ENCODE measurements at regions of chr4 and their contacts with region 1.

Region 1: DNA sequence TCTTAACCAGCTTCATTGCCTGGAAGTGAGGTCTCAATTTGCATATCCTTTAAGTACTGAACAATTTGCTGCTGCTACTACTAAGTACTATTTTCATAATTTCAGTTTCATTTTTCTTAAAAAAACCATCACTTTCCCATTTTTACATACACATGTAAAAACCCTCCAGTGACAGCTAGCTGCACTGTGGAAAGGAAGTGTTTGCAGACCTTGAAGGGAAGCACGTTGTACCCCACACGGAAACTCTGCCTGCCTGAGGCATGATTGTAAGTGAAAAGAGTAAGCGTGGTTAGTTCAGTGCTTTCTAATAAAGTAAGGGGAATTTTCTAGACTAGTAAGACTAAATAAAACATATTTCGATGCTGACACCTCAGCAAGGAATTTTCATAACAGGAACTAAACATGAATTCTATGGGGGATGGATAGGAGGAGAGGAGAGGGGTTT is 103.6 kb downstream of the RAPGEF2 start:
- DNase-seq: no peak
- ATAC-seq: no peak

Region 2: DNA sequence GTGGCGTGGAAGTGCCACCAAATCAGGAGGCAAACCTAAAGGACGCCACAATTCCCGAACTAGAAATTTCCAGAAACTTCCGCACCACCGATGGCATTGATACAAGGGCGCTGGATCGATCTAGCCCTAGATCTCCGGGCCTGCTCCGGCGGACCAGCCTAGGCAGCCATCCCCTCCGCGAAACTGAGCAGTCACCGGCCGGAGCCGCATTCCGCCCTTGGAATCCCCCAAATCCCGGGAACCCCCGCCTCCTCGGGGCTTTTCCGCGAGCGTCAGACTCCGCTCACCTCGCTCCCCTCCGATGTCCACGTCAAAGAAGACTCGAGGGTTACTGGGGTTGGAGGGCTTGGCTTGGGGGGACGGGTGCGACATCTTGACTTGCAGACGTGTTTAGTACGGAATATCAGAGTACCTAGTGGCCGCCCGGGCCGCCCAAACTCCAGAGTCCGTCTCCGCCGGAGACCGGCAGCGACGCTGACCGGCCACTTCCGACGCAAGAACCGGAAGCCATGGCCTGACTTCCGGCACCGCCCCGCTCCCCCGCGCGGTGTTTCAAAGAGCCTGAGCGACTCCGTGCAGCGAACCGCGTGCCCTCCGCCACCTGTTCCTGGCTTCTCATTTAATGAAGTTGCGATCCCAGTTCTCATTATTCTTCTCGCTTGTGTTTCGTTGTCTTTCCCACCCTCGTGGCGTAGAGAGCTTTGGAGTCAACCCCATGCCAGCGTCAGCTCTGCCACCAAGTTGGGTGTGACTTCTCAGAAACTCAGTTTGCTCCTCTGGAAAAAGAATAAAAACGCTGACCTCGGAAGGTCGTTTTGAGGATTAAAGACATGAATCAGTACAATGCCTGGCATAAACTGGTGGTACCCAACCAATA is 483.3 kb before region 1 on chr4 and contains the start of gene PPID:
- intact Hi-C with region 1: loop called in 1 of 2 experiments (anchors 10 kb)
- DNase-seq: peak; percentile 89
- ATAC-seq: peak; percentile 97 to 99
- total RNA-seq, gene PPID: 22.6 to 30.7 TPM

Region 3: GRCh38 chr4:158768555-158769174 is 437.8 kb before region 1 on chr4 and contains the start of gene FNIP2:
- intact Hi-C with region 1: no loop called
- DNase-seq: peak; percentile 89
- ATAC-seq: peak; percentile 95 to 97
- total RNA-seq, gene FNIP2: 40.6 to 55.3 TPM

Region 4: GRCh38 chr4:158856852-158857251 is 349.6 kb before region 1 on chr4:
- intact Hi-C with region 1: loop called in 1 of 2 experiments (anchors 10 kb)
- DNase-seq: no peak
- ATAC-seq: peak; percentile 69 to 70

Region 5: DNA sequence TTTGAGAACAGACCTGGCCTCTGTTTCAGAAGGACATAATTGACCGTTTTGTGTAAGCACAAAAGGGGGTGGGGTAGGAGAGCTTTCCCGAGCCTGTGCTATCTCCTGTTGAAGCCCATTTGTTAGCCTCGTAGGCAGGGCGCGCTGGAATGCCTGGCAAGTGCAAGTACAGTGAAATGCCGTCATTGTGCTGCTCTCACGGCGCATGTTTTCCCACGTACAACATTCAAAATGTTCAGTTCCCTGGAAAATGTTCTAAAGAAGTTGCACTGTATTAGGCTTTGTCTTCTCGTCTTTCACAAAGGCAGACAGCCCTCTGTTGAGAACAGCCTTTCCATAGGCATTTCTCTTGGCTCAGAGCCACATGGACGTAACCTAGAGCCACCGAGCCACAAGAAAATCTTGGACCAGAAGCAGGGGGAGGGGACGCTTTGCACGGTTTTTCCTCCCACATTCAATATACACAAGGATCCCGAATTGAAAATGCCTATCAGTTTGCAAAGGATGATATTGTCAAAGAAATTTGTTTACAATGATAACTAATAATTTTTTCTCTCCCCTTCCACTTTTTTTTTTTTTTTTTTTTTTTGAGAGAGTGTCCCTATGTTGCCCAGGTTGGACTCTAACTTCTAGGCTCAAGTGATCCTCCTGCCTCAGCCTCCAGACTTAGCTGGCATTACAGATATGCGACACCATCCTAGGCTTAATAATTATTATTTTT is 158.1 kb before region 1 on chr4:
- intact Hi-C with region 1: no loop called
- DNase-seq: peak; percentile 77
- ATAC-seq: peak; percentile 95 to 99

Measured in left cardiac atrium (tissue), 4 donors.